ENCODE measurements at regions of chr2 and their contacts with region 1.

Region 1: DNA sequence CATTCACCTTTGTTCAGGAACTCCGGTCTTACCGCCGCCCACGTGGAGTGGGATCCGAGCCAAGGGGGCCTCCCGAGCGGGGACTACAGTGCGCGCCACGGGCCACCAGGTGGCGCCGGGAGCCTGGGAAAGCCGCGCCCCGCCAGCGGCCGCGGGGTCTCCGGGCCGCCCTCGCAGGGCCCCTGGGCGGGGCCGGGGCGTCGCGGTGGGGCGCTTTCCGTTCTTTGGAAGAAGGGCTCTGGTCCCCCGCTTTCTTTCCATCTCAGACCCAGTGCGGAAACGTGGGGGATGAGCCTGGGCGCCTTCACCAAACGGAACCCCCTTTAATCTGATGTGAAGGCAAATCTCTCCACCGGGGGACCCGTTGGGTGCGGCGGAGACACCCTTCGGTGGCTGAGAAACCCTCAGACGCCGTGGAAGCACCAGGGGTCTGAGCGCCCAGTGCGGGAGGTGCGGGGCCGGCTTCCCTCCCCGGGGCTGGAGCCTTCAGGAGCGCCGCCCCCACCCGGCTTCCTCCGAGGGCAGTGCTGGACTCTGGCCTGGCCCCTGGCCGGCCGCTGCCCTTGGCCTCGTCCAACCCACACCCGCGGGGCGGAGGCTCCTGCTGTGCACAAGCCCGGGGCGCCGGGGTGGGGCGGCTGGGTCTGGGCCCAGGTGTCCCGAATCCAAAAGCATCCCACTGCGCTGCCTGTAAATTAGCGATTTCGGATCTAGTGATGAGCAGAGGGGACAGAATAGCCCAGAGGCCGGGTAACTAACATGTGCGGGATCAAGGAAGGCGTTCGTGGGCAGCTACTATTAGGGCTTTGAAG is 44.6 kb downstream of the GORASP2 start:
- DNase-seq: peak; percentile 96
- H3K4me3 Mint-ChIP-seq: peak overlapping the region; percentile 82
- H3K27ac Mint-ChIP-seq: peak overlapping the region; percentile 56
- H3K4me1 Mint-ChIP-seq: peaks cover 10% of the 10 kb centered on the region
- H3K27me3 Mint-ChIP-seq: peaks cover 3% of the 10 kb centered on the region

Region 2: DNA sequence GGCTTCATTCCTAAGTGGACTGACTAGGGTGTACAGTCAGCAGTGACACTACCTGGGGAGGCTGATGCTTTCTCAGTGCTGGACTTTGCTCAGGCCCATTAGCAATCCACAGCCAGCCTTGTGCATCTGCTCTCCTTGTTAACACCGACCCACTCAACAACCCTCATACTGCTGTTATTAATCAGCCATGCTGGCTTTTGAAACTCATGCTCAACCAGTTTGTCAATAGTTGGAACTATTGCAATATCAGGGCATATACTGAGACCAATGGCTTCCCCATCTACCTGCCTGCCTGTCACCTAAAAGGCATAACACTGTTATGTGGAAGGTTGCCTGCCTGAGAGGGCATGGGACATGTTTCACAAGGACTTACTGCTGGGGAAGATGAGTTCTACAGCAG is 117.6 kb before region 1 on chr2:
- intact Hi-C with region 1: no loop called
- DNase-seq: no peak
- H3K4me3 Mint-ChIP-seq: no peak overlapping the region
- H3K27ac Mint-ChIP-seq: no peak overlapping the region
- H3K4me1 Mint-ChIP-seq: no peaks in the 10 kb centered on the region
- H3K27me3 Mint-ChIP-seq: no peaks in the 10 kb centered on the region

Region 3: GRCh38 chr2:171086352-171087290 is 112.9 kb after region 1 on chr2:
- intact Hi-C with region 1: loop called (anchors 1 kb)
- DNase-seq: peak; percentile 84
- H3K4me3 Mint-ChIP-seq: peak overlapping the region; percentile 83
- H3K27ac Mint-ChIP-seq: peak overlapping the region; percentile 87
- H3K4me1 Mint-ChIP-seq: peaks cover 53% of the 10 kb centered on the region
- H3K27me3 Mint-ChIP-seq: no peaks in the 10 kb centered on the region

Region 4: GRCh38 chr2:171244970-171245782 is 271.5 kb after region 1 on chr2:
- intact Hi-C with region 1: loop called (anchors 5 kb)
- DNase-seq: no peak
- H3K4me3 Mint-ChIP-seq: no peak overlapping the region
- H3K27ac Mint-ChIP-seq: no peak overlapping the region
- H3K4me1 Mint-ChIP-seq: peaks cover 43% of the 10 kb centered on the region
- H3K27me3 Mint-ChIP-seq: no peaks in the 10 kb centered on the region

Region 5: GRCh38 chr2:171416009-171416926 is 442.6 kb after region 1 on chr2:
- intact Hi-C with region 1: loop called (anchors 1 kb)
- DNase-seq: peak; percentile 93
- H3K4me3 Mint-ChIP-seq: no peak overlapping the region
- H3K27ac Mint-ChIP-seq: peak overlapping the region; percentile 80
- H3K4me1 Mint-ChIP-seq: peaks cover 23% of the 10 kb centered on the region
- H3K27me3 Mint-ChIP-seq: no peaks in the 10 kb centered on the region

Region 6: DNA sequence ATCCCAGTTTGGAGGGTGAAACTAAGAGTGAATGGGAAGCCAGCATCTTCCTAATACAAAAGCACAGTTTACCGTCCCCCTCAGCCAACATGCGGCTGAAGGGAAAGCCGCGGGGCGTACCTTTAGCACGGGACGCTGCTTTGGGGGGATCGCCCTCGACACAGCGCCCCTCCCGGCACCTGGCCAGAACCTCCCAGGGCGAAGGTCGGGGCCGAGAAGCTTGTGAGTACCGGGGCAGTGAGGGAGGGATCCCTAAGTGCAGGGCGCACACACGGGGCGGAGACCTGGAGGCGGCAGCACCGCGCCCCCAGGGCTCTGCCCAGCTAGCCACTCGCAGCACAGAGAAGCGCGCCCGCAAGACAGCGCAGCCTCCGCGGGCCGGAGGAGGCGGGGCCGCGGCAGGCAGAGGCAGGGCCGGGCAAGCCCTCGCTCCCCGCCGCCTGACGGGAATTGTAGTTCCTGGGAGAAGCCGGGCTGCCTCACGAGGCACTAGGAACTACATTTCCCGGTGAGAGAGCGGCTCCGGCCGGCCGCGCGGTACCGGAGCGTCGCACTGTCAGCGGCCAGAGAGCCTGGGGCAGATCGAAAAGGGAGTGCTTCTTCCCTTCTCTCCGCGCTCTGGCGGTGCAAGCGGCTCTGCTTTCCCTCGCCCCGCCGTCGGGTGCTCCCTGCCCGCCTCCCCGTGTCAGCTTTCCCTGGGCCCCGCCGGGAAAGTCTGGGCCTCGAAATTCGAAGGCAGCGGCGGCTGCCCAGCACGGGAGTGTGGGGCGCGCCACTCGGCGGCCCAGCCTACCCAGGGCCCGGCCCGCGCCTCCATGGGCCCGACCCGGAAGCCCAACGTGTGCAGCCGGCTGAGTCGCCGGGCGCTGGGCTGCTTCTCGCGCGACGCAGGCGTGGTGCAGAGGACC is 460.3 kb after region 1 on chr2 and contains the starts of genes DCAF17 and METTL8:
- intact Hi-C with region 1: loop called (anchors 1 kb)
- DNase-seq: peak; percentile 98
- H3K4me3 Mint-ChIP-seq: peak within 1 kb of the TSS; percentile 82
- H3K27ac Mint-ChIP-seq: peak within 1 kb of the TSS; percentile 88
- H3K4me1 Mint-ChIP-seq: peaks cover 23% of the 10 kb centered on the region
- H3K27me3 Mint-ChIP-seq: no peaks in the 10 kb centered on the region
- total RNA-seq, gene DCAF17: 27.3 and 27.4 TPM in 2 replicates
- total RNA-seq, gene METTL8: 33.1 and 42.9 TPM in 2 replicates

Region 7: GRCh38 chr2:171447675-171448074 is 474.0 kb after region 1 on chr2:
- intact Hi-C with region 1: loop called (anchors 1 kb)
- DNase-seq: no peak
- H3K4me3 Mint-ChIP-seq: no peak overlapping the region
- H3K27ac Mint-ChIP-seq: no peak overlapping the region
- H3K4me1 Mint-ChIP-seq: no peaks in the 10 kb centered on the region
- H3K27me3 Mint-ChIP-seq: no peaks in the 10 kb centered on the region

Region 8: DNA sequence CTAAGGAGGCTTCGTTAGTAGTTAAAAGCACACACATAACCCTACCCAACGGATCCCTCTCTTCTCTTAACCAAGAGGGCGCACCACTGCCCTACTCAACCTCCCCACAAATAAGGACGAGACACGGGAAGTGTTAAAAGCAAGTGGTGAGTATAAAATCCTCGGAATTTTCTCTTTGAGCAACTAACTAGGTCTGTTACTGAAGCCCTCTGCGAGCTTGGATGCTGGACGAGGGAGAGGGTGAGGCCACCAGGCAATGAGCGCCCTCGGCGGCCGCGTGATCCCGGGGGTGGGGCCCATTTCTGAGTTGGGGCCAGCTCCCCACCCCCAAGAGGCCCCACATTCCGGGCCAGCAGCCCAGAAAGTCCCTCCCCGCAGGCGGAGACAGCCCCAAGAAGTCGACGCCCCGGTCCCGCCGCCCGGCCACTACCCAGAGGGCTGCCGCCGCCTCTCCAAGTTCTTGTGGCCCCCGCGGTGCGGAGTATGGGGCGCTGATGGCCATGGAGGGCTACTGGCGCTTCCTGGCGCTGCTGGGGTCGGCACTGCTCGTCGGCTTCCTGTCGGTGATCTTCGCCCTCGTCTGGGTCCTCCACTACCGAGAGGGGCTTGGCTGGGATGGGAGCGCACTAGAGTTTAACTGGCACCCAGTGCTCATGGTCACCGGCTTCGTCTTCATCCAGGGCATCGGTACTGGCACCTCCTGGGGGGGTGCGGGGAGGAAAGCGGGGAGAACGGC is 548.5 kb after region 1 on chr2 and contains the start of gene CYBRD1:
- intact Hi-C with region 1: loop called (anchors 5 kb)
- DNase-seq: peak; percentile 71
- H3K4me3 Mint-ChIP-seq: peak within 1 kb of the TSS; percentile 88
- H3K27ac Mint-ChIP-seq: peak within 1 kb of the TSS; percentile 78
- H3K4me1 Mint-ChIP-seq: peaks cover 7% of the 10 kb centered on the region
- H3K27me3 Mint-ChIP-seq: peaks cover 46% of the 10 kb centered on the region
- total RNA-seq, gene CYBRD1: 4.7 and 5.1 TPM in 2 replicates